RWPE1 (cell line): ENCODE measurements at regions of chr1 and their contacts with region 1.

Region 1: GRCh38 chr1:235328357-235329138 is at the start of gene GGPS1:
- DNase-seq: peak; percentile 96
- H3K27ac ChIP-seq: peak within 1 kb of the TSS; percentile 95
- CTCF ChIP-seq: no peak

Region 2: DNA sequence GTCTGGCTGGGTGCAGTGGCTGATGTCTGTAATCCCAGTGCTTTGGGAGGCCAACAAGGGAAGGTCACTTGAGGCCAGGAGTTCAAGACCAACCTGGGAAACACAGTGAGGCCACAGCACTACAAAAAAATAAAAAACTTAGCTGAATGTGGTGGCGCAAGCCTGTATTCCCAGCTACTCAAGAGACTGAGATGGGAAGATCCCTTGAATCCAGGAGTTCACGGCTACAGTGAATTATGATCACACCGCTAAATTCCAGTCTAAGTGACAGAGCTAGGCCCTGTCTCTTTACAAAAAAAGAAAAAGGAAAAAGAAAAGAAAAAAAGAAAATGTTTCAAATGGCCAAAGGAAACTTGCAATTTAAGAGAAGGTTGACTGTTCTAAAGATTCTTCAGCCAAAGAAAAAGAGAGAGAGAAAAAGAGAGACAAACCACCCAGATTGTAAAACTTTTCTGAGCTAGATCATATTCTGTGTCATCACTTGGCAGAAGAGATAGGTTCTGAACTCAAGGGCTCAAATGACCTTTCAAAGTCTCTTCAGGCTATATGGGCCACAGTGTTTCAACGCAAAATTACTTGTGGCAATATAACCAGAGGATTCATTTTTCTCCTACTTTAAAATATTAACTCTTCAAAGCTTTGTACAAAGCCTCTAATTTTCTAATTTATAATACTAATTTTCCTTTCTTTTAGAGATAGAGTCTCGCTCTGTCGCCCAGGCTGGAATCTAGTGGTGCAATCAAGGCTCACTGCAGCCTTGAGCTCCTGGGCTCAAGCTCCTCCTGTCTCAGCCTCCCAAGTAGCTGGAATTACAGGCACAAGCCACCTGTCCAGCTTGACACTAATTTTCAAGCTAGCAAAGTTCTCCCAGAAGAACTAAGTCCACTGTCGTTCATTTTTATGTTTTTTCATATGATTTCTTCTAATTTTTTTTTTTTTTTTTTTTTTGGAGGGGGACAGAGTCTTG is 21.1 kb before region 1 on chr1:
- CTCF ChIA-PET with region 1: no interaction called
- POLR2A ChIA-PET with region 1: interaction called, 13 read pairs
- DNase-seq: no peak
- H3K27ac ChIP-seq: no peak overlapping the region
- CTCF ChIP-seq: no peak

Region 3: GRCh38 chr1:235391874-235392273 is 63.3 kb after region 1 on chr1:
- CTCF ChIA-PET with region 1: no interaction called
- POLR2A ChIA-PET with region 1: interaction called, 12 read pairs
- DNase-seq: no peak
- H3K27ac ChIP-seq: no peak overlapping the region
- CTCF ChIP-seq: no peak